PC-9 (cell line): ENCODE measurements at regions of chr6 and their contacts with region 1.

Region 1: DNA sequence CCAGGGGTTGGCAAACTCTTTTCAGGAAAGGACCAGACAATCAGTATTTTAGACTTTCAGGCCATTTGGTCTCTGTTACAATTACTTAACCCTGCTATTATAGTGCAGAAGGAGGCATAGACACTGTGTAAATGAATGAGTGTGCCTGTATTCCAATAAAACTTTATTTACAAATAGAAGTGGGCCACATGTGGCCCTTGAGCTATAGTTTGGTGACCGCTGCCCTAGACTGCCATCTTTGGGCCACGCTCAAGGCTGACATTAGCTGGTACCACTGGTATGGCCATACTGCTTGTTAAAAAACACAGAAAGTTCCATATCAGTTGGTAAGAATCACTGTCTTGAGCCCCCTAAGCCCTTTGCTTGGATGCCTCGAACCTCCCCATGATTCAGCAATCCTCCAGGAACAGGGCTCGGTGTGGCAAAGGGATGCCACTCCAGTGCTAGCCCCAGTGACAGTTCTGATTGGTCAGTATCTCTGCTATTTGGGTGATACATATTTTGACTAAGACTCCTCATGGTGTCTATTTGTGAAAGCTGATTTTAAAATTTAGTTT is 23.3 kb upstream of the SNRNP48 start:
- DNase-seq: no peak
- H3K4me3 ChIP-seq: no peak overlapping the region
- H3K27ac ChIP-seq: no peak overlapping the region
- H3K4me1 ChIP-seq: no peaks in the 10 kb centered on the region
- H3K27me3 ChIP-seq: no peaks in the 10 kb centered on the region
- CTCF ChIP-seq: no peak

Region 2: DNA sequence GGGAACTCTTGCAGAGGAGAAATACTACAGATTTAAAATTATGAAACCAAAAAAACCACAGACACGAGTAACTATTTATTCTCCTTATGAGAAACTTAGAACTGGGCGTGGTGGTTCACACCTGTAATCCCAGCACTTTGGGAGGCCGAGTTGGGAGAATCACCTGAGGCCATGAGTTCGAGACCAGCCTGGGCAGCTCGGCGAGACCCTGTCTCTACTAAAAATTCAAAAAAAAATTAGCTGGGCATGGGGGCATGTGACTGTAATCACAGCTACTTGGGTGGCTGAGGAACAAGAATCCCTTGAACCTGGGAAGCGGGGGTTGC is 290.5 kb before region 1 on chr6:
- CTCF ChIA-PET with region 1: interaction called, 12 read pairs
- POLR2A ChIA-PET with region 1: no interaction called
- intact Hi-C with region 1: no loop called
- DNase-seq: no peak
- H3K4me3 ChIP-seq: no peak overlapping the region
- H3K27ac ChIP-seq: no peak overlapping the region
- H3K4me1 ChIP-seq: no peaks in the 10 kb centered on the region
- H3K27me3 ChIP-seq: no peaks in the 10 kb centered on the region
- CTCF ChIP-seq: no peak; the same call in 1 of the 2 replicates